Posterior vena cava (tissue), 2 donors: ENCODE measurements at regions of chrX and their contacts with region 1.

Region 1: GRCh38 chrX:112863850-112864249 is 23.2 kb upstream of the AMOT start:
- DNase-seq: no peak

Region 2: DNA sequence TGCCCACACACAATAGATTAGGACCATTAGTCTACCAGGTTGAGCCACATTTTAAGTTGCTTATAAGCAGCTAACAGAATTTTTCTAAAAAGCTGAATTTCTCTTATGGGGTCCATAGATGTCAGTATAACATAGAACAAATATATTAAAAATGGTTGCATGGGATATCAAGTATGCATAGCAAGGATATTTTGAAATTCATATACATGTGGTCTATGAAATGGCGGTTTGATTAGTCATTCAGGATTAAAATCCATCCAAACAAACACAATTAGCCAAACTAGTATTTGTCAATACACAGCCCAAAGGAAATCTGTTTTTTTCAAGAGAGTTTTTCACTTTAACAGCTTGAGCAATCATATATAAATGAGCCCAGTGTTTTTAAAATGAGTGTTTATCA is 10.3 kb after region 1 on chrX:
- intact Hi-C with region 1: no loop called
- DNase-seq: no peak

Region 3: GRCh38 chrX:113747274-113747973 is 883.6 kb after region 1 on chrX:
- intact Hi-C with region 1: loop called in 1 of 2 experiments (anchors 5 kb)
- DNase-seq: no peak